GM12878 (cell line): ENCODE measurements at regions of chr4 and their contacts with region 1.

Region 1: DNA sequence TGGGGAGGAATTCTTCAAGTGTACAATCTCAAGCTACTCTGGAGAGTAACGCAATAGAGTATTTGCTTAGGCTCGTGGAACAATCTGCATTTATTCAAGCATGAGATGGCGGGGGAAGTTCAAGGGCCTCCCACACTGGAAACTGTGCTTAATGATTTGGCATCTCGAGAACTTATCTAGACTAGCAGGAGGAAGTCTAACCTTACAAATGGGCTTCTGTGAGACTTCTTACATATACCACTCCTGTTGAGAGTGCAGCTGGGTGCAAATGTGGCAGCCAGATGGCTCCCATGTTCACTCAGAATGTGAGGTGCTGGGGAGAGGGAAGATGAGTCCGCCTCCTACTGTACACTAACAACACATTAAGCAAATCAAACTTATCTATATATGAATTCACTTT is 29.3 kb upstream of the PTPN13 start:
- DNase-seq: no peak
- ATAC-seq: peak; percentile 52
- H3K4me3 ChIP-seq: no peak overlapping the region
- H3K27ac ChIP-seq: no peak overlapping the region
- H3K4me1 ChIP-seq: no peaks in the 10 kb centered on the region; the same call in 1 of the 2 replicates
- H3K27me3 ChIP-seq: no peaks in the 10 kb centered on the region
- CTCF ChIP-seq: peak in 1 of 3 experiments; percentile 50; a peak in 2 of 6 replicates
- EP300 ChIP-seq: no peak
- POLR2A ChIP-seq: no peak
- RAD21 ChIP-seq: peak; percentile 56; the same call in 1 of the 2 replicates

Region 2: DNA sequence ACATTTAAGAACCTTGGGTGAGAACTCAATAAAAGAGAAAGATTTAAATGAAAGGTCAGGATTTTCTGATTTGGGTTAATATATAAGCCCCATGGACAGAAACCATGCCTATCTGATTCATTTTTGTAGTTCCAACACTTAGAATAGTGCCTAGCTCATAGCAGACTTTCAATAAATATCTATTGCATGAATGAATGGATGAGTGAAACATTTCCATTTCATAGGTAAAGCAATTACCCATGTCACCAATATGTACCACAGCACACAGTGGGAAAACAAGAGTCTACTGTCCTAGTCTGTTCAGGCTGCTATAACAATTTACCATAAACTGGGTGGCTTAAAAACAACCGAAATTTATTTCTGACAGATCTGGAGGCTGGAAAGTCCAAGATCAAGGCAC is 34.6 kb before region 1 on chr4:
- CTCF ChIA-PET with region 1: interaction called, 8 read pairs
- POLR2A ChIA-PET with region 1: no interaction called
- RAD21 ChIA-PET with region 1: no interaction called
- SMC1A ChIA-PET with region 1: interaction called, 3 read pairs
- in situ Hi-C with region 1: no loop called
- intact Hi-C with region 1: loop called (anchors 1 kb)
- DNase-seq: no peak
- ATAC-seq: peak; percentile 87
- H3K4me3 ChIP-seq: no peak overlapping the region
- H3K27ac ChIP-seq: no peak overlapping the region
- H3K4me1 ChIP-seq: no peaks in the 10 kb centered on the region
- H3K27me3 ChIP-seq: no peaks in the 10 kb centered on the region; a peak in 1 of 4 replicates
- CTCF ChIP-seq: no peak
- EP300 ChIP-seq: peak in 1 of 2 experiments; percentile 29; a peak in 1 of 4 replicates
- POLR2A ChIP-seq: no peak
- RAD21 ChIP-seq: no peak

Region 3: DNA sequence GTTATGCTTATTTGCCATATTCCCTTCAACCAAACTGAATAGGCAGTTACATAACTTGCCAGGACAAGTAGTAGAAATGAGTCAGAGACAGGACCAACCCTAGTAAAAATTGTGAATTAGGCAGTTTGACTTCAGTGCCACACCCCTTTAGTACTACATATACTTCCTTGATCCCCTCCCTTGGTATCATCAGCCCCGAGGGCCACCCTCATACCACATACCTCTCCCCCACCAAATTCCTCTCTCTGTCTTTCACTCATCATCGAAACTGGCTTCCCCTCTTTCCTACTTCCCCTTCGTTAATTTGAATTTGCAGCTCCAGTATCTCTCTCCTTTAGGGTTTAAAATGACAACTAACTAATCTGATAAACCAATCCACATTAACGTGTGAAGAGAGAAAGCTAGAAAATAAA is 21.4 kb after region 1 on chr4:
- CTCF ChIA-PET with region 1: interaction called, 35 read pairs
- POLR2A ChIA-PET with region 1: interaction called, 11 read pairs
- RAD21 ChIA-PET with region 1: interaction called, 17 read pairs
- SMC1A ChIA-PET with region 1: interaction called, 77 read pairs
- in situ Hi-C with region 1: no loop called
- intact Hi-C with region 1: no loop called
- DNase-seq: no peak
- ATAC-seq: peak; percentile 76
- H3K4me3 ChIP-seq: no peak overlapping the region
- H3K27ac ChIP-seq: no peak overlapping the region
- H3K4me1 ChIP-seq: 0 out of 2 replicates have a peak, but pooled peaks cover 3% of the 10 kb centered on the region
- H3K27me3 ChIP-seq: no peaks in the 10 kb centered on the region
- CTCF ChIP-seq: no peak
- EP300 ChIP-seq: 0 out of 4 replicates have a peak, but pooled peaks of 1 of the 2 experiments have one; percentile 21
- POLR2A ChIP-seq: no peak
- RAD21 ChIP-seq: no peak

Region 4: GRCh38 chr4:86848732-86849619 is 284.2 kb after region 1 on chr4 and contains the start of gene SLC10A6:
- CTCF ChIA-PET with region 1: no interaction called
- POLR2A ChIA-PET with region 1: no interaction called
- RAD21 ChIA-PET with region 1: no interaction called
- SMC1A ChIA-PET with region 1: no interaction called
- in situ Hi-C with region 1: no loop called
- intact Hi-C with region 1: no loop called
- DNase-seq: no peak
- ATAC-seq: no peak
- H3K4me3 ChIP-seq: no peak within 1 kb of the TSS
- H3K27ac ChIP-seq: no peak within 1 kb of the TSS
- H3K4me1 ChIP-seq: no peaks in the 10 kb centered on the region
- H3K27me3 ChIP-seq: no peaks in the 10 kb centered on the region
- CTCF ChIP-seq: no peak
- EP300 ChIP-seq: no peak
- POLR2A ChIP-seq: no peak
- RAD21 ChIP-seq: no peak
- polyA plus RNA-seq, gene SLC10A6: not detected